Tibial artery (tissue), 4 donors: ENCODE measurements at regions of chr13 and their contacts with region 1.

Region 1: GRCh38 chr13:25922376-25922775 is 129.4 kb downstream of the SHISA2 start:
- DNase-seq: no peak
- H3K4me3 ChIP-seq: no peak overlapping the region
- H3K27ac ChIP-seq: no peak overlapping the region
- H3K4me1 ChIP-seq: no peaks in the 10 kb centered on the region
- H3K27me3 ChIP-seq: no peaks in the 10 kb centered on the region
- CTCF ChIP-seq: no peak

Region 2: GRCh38 chr13:25886438-25887214 is 35.8 kb before region 1 on chr13:
- intact Hi-C with region 1: loop called (anchors 1 kb)
- DNase-seq: no peak
- H3K4me3 ChIP-seq: no peak overlapping the region
- H3K27ac ChIP-seq: no peak overlapping the region
- H3K4me1 ChIP-seq: peaks cover 0 to 8% (median 0%) of the 10 kb centered on the region in 4 donors
- H3K27me3 ChIP-seq: peaks cover 0 to 17% of the 10 kb centered on the region in 2 donors
- CTCF ChIP-seq: no peak